Endothelial cell of umbilical vein (primary cell): ENCODE measurements at regions of chr1 and their contacts with region 1.

Region 1: GRCh38 chr1:22704440-22705067 is 6.1 kb upstream of the EPHB2 start:
- DNase-seq: peak; percentile 76
- H3K4me3 ChIP-seq: no peak overlapping the region
- H3K27ac ChIP-seq: no peak overlapping the region
- H3K4me1 ChIP-seq: peaks cover 14% of the 10 kb centered on the region
- H3K27me3 ChIP-seq: no peaks in the 10 kb centered on the region
- CTCF ChIP-seq: peak; percentile 88 to 90
- POLR2A ChIP-seq: no peak

Region 2: DNA sequence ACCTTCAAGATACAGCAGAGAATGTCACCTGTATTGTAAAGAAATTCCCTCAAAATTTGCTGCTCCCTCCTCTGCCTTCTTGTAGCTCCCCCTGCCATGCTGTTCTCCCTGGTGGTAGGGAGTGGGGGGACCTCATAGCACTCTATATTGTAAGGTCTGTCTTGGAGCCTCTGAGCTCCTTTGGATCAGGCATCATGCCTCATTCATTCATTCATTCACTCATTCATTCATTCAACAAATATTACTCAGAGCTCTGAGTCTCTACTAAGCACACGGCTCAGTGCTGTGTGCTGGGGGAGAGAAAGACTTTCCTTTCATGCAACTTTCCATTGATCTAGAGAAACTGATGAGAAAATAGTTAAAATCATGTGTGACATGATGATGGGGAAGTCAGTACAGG is 21.0 kb before region 1 on chr1:
- CTCF ChIA-PET with region 1: interaction called, 11 read pairs
- POLR2A ChIA-PET with region 1: no interaction called
- dilution Hi-C with region 1: no loop called
- intact Hi-C with region 1: no loop called
- DNase-seq: no peak
- H3K4me3 ChIP-seq: no peak overlapping the region
- H3K27ac ChIP-seq: no peak overlapping the region
- H3K4me1 ChIP-seq: no peaks in the 10 kb centered on the region
- H3K27me3 ChIP-seq: peaks cover 3 to 4% of the 10 kb centered on the region in 2 experiments
- CTCF ChIP-seq: no peak
- POLR2A ChIP-seq: no peak

Region 3: DNA sequence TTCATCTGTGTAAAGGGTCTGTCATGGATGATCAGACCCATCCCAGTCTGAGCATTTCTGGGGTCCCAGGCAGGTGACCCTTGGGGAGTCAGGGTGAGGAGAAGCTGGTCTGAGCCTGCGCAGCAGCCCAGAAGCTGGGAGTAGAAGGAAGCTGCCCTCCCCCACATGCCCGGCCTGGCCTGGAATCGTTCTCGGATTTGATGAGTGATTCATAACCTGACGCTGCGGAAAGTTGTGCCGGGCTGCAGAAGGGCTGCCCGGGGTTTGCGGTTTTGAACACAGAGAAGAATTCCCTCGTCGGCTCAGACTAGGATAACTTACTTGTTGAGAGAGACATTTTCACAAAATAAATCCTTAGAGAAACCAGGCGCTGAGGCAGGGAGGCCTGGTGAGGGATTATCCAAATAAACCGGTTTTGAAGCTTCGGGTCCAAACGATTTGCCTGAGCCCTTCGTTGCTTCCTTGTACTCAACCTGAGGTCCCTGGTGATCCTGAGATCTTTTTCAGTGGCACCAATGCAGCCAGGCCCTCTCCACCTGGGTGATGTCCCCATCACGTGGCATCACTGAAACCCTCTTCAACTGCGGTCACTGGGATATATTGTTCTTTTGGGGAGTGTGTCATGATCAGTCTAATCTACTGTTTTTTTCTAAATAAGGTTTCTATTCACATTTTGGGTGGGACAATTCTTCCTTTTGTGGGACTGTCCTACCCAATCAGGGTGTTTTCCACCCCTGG is 35.3 kb after region 1 on chr1:
- CTCF ChIA-PET with region 1: interaction called, 26 read pairs
- POLR2A ChIA-PET with region 1: no interaction called
- dilution Hi-C with region 1: no loop called
- intact Hi-C with region 1: no loop called
- DNase-seq: peak; percentile 81
- H3K4me3 ChIP-seq: no peak overlapping the region
- H3K27ac ChIP-seq: peak overlapping the region; percentile 78
- H3K4me1 ChIP-seq: peaks cover 52% of the 10 kb centered on the region
- H3K27me3 ChIP-seq: no peaks in the 10 kb centered on the region
- CTCF ChIP-seq: no peak
- POLR2A ChIP-seq: no peak

Region 4: GRCh38 chr1:22773981-22774832 is 69.7 kb after region 1 on chr1:
- CTCF ChIA-PET with region 1: interaction called, 10 read pairs
- POLR2A ChIA-PET with region 1: no interaction called
- dilution Hi-C with region 1: no loop called
- intact Hi-C with region 1: loop called (anchors 1 kb)
- DNase-seq: peak; percentile 22
- H3K4me3 ChIP-seq: no peak overlapping the region
- H3K27ac ChIP-seq: no peak overlapping the region
- H3K4me1 ChIP-seq: peaks cover 4% of the 10 kb centered on the region
- H3K27me3 ChIP-seq: no peaks in the 10 kb centered on the region
- CTCF ChIP-seq: no peak
- POLR2A ChIP-seq: no peak

Region 5: DNA sequence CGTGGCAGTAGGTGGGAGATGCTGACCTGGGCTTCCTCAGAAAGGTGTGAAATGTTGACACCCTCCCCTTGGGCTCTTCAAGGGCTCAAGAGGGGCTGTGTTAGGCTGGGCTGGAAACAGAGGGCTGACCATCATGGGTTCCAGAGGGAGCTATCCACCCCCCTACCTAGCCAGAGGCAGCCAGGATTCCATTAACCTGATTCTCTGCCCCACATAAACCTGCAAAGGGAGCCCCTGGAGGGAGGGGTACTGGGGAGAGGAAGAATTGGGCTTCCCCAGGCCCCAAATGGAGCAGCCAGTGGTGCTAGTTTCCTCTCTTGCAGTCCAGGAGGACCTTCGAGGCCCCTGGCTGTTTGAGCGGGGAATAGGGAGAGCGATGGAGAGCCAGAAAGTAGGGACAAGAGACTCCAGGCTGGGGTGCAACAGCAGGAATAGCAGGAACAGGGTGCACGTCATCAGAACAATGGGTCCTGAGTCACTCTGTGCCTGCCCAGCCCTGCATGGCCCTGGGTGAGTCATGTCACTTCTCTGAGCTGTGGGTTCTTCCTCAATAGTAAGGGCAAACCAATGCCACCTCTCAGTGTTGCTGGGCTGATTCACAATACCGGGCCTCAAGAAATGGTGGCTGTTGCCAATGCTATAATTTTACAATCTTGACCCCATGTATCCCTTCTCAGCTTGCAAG is 127.3 kb after region 1 on chr1:
- CTCF ChIA-PET with region 1: interaction called, 10 read pairs
- POLR2A ChIA-PET with region 1: no interaction called
- dilution Hi-C with region 1: no loop called
- intact Hi-C with region 1: no loop called
- DNase-seq: peak; percentile 92
- H3K4me3 ChIP-seq: no peak overlapping the region
- H3K27ac ChIP-seq: peak overlapping the region; percentile 78
- H3K4me1 ChIP-seq: peaks cover 26% of the 10 kb centered on the region
- H3K27me3 ChIP-seq: no peaks in the 10 kb centered on the region
- CTCF ChIP-seq: no peak
- POLR2A ChIP-seq: no peak

Region 6: DNA sequence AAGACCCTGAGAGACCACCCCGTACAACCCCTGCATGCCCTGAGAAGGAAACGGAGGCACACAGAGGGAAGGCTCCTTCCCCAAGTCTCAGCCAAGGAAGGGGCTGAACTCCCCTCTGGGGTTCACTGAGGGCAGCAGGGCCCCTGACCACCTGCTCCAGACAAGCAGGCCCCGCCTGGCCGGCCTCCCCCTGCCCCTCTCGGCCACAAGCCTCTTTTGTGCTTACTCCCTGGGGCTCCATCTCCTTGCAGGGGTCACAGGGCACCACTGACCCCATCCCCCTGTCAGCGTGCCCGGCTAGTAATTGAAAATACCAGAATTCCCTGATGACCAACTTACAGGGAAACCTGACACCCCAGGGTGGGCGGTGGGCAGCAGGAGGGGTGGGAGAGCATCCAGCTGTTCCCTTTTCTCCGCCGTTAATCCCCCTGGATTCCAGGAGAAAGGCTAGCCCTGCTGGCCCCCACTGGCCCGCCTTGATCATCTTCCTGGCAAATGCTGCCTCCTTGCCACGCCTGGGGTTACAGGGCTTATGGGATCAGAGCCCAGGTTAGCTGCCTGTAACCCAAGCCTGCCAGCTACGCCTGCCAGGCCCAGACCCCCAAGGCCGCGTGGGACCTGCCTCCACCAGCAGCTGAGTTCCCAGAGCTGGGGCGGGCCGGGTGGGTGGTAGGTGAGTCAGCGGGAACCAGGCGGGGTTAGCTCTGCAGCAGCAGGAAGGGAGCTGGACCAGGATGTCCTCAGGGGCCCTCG is 172.0 kb after region 1 on chr1:
- CTCF ChIA-PET with region 1: interaction called, 18 read pairs
- POLR2A ChIA-PET with region 1: no interaction called
- dilution Hi-C with region 1: no loop called
- intact Hi-C with region 1: no loop called
- DNase-seq: peak; percentile 77
- H3K4me3 ChIP-seq: no peak overlapping the region
- H3K27ac ChIP-seq: peak overlapping the region; percentile 2
- H3K4me1 ChIP-seq: peaks cover 21% of the 10 kb centered on the region
- H3K27me3 ChIP-seq: no peaks in the 10 kb centered on the region
- CTCF ChIP-seq: no peak
- POLR2A ChIP-seq: no peak

Region 7: DNA sequence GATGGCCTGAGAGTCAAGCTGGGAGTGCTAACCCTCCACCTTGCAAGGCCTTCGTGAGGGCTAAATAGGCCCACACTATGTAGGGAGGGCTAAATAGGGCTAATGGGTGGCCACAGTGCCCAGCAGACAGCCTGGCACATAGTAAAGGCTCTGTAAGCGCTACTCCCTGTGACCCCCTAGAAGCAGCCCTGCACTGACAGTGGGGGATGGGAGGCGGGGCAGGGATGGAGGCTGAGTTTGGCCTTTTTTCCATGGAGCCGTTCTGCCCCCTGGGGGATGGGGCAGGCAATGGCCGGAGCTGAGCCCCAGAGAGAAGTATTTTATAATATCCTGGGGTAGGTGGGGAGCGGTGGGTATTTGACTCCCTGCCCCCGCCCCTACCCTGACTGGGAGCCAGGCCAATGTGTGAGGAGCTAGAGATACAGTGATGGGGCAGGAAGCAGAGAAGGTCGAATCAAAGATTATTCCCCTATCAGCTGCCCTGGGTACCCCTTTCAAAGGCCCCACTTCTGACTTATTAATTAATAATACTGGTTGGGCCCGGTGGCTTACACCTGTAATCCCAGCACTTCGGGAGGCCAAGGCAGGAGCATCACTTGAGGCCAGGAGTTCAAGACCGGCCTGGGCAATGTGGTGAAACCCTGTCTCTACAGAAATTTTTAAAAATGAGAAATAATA is 225.8 kb after region 1 on chr1:
- CTCF ChIA-PET with region 1: interaction called, 51 read pairs
- POLR2A ChIA-PET with region 1: no interaction called
- dilution Hi-C with region 1: no loop called
- intact Hi-C with region 1: no loop called
- DNase-seq: peak; percentile 49
- H3K4me3 ChIP-seq: no peak overlapping the region
- H3K27ac ChIP-seq: no peak overlapping the region
- H3K4me1 ChIP-seq: no peaks in the 10 kb centered on the region
- H3K27me3 ChIP-seq: no peaks in the 10 kb centered on the region
- CTCF ChIP-seq: peak; percentile 84 to 88
- POLR2A ChIP-seq: no peak